ENCODE measurements at regions of chr2 and their contacts with region 1.

Region 1: DNA sequence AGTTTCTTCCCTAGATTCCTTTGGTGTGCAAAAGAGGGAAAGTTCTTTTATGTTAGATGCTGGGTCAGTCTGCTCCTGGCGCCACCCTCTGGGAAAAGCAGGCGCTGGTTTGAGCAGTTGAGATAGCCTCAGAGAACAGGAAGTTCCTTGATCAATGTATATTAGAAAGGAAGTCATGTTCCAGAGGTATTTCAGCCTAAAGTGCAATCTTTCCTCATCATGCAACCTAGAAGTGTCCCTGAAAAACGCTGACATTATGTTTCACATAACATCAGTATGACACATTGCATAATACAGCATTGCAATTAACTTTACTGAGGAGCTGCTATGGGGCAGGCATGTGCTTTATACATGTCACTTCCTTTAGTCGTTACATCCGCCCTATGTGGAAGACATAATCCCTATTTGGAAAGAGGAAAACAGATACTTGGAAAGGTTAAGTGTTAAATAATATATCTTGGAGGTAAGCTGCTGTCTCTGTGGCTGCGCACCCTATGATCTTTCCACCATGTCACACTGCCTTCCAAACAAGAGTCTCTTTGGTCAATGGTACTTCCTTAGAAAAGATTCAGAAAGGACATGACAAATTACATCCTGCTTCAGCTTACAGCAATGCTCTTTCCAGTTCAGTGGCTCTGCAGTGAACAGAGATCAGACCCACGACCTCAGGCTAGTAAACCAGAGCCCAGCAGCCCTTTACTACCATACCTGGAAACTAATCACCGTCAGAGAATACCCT is 369.7 kb downstream of the RAD51AP2 start:
- DNase-seq: peak; percentile 53
- H3K4me3 ChIP-seq: no peak overlapping the region
- H3K27ac ChIP-seq: no peak overlapping the region
- H3K4me1 ChIP-seq: peaks cover 0 to 8% of the 10 kb centered on the region in 2 experiments; a peak in 1 of 4 replicates
- H3K27me3 ChIP-seq: no peaks in the 10 kb centered on the region
- CTCF ChIP-seq: peak; percentile 60
- EP300 ChIP-seq: no peak; a peak in 1 of 4 replicates
- RAD21 ChIP-seq: peak; percentile 79

Region 2: GRCh38 chr2:16925145-16925544 is 223.4 kb before region 1 on chr2:
- CTCF ChIA-PET with region 1: no interaction called
- POLR2A ChIA-PET with region 1: no interaction called
- DNase-seq: no peak
- H3K4me3 ChIP-seq: no peak overlapping the region
- H3K27ac ChIP-seq: no peak overlapping the region
- H3K4me1 ChIP-seq: no peaks in the 10 kb centered on the region
- H3K27me3 ChIP-seq: no peaks in the 10 kb centered on the region
- CTCF ChIP-seq: no peak
- EP300 ChIP-seq: no peak
- RAD21 ChIP-seq: no peak

Region 3: DNA sequence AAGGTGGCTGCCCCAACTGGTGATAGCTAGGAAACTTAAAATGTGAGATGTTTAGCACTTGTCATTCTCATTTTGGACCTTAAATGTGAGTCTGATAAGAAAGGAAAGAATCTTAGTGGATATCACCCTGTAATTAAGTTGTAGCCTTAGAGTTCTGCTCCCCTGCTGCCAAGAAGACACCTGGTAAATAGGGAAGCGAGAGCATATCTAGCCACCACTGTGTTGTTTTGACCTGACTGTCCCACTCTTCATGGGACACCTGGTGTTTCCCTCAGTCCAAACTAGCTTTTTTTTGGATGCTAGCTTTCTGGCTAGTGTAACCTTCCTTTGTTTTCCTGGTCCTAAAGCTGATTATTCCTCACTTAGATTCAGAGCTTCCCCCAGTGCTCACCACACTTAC is 12.0 kb after region 1 on chr2:
- CTCF ChIA-PET with region 1: interaction called, 19 read pairs
- POLR2A ChIA-PET with region 1: no interaction called
- DNase-seq: no peak
- H3K4me3 ChIP-seq: no peak overlapping the region
- H3K27ac ChIP-seq: no peak overlapping the region
- H3K4me1 ChIP-seq: no peaks in the 10 kb centered on the region; a peak in 1 of 4 replicates
- H3K27me3 ChIP-seq: no peaks in the 10 kb centered on the region
- CTCF ChIP-seq: no peak
- EP300 ChIP-seq: no peak
- RAD21 ChIP-seq: no peak